ENCODE measurements at regions of chr17 and their contacts with region 1.

Region 1: GRCh38 chr17:37047631-37048104 is 98.9 kb downstream of the AATF start:
- H3K4me3 ChIP-seq: no peak overlapping the region
- H3K27ac ChIP-seq: no peak overlapping the region
- H3K4me1 ChIP-seq: peaks cover 20% of the 10 kb centered on the region; the same call in 1 of the 2 replicates
- CTCF ChIP-seq: peak; percentile 78

Region 2: GRCh38 chr17:36601303-36602029 is 446.2 kb before region 1 on chr17 and contains the start of gene MRM1:
- CTCF ChIA-PET with region 1: interaction called, 30 read pairs
- POLR2A ChIA-PET with region 1: no interaction called
- H3K4me3 ChIP-seq: peak within 1 kb of the TSS; percentile 88
- H3K27ac ChIP-seq: peak within 1 kb of the TSS; percentile 56
- H3K4me1 ChIP-seq: peaks cover 9% of the 10 kb centered on the region; the same call in 1 of the 2 replicates
- CTCF ChIP-seq: peak; percentile 61; the same call in 1 of the 2 replicates

Region 3: DNA sequence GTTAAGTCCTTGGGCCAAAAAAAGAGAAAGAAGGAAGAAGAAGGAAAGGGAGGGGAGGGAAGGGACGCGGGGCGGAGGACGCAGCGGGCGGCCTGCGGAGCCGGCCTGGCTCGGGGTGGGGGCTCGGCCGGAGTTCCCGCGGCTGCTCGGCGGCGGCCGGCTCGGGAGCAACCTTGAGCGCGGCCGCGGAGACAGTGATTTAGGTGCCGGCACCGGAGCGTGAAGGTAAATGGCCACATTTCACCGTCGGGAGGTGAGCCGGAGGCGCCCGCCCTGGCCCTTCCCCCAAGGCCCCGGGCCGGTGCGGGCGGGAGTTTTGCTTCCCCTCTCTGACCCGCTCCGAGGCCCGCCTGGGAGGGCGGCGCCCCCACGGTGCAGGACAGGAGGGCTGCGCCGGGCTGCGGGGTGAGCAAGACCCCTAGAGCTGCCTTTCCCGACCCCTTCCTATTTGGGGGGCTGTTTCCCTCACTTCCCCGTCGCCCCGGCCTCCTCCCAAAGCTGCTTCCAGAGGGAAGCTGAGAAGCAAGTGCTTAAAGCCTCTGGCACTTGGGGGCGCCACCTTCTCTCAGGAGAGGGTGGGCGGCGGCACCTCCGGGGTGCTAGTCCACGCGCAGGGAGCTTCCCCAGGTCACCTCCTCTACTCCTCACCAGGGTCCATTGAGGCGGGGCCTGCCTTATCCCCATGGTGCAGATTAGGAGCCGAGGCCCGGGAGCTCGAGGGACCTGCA is 389.7 kb before region 1 on chr17:
- CTCF ChIA-PET with region 1: interaction called, 24 read pairs
- POLR2A ChIA-PET with region 1: no interaction called
- H3K4me3 ChIP-seq: peak overlapping the region; percentile 48
- H3K27ac ChIP-seq: peak overlapping the region; percentile 28; the same call in 1 of the 2 replicates
- H3K4me1 ChIP-seq: 0 out of 2 replicates have a peak, but pooled peaks cover 2% of the 10 kb centered on the region
- CTCF ChIP-seq: peak; percentile 85

Region 4: DNA sequence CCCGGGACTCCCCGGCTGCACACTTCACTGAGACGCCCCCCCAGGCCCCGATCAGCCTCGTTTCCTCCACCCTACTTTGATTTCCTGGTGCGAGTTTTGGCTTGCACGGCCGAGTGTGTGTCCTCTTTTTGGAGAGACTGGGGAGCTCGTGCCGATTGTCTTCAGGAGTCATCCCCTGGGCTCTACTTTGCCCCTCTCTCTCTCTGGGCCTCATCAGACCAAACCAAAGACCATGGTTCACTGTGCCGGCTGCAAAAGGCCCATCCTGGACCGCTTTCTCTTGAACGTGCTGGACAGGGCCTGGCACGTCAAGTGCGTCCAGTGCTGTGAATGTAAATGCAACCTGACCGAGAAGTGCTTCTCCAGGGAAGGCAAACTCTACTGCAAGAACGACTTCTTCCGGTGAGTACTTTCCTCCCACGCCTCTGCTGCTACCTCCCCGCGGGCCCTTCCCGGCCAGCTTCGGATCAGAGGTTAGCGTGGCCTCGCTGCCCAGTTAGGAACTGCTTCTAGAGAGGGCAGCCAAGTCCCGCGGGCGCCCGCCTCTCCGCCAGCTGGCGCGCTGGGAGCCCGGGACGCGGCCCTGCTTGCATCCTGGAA is 109.6 kb before region 1 on chr17:
- CTCF ChIA-PET with region 1: interaction called, 18 read pairs
- POLR2A ChIA-PET with region 1: interaction called, 16 read pairs
- H3K4me3 ChIP-seq: peak overlapping the region; percentile 69
- H3K27ac ChIP-seq: peak overlapping the region; percentile 73; the same call in 1 of the 2 replicates
- H3K4me1 ChIP-seq: peaks cover 3% of the 10 kb centered on the region; the same call in 1 of the 2 replicates
- CTCF ChIP-seq: no peak

Region 5: GRCh38 chr17:37060928-37061327 is 13.3 kb after region 1 on chr17:
- CTCF ChIA-PET with region 1: interaction called, 16 read pairs
- POLR2A ChIA-PET with region 1: no interaction called
- H3K4me3 ChIP-seq: no peak overlapping the region
- H3K27ac ChIP-seq: no peak overlapping the region
- H3K4me1 ChIP-seq: no peaks in the 10 kb centered on the region
- CTCF ChIP-seq: no peak

Region 6: GRCh38 chr17:37111329-37111728 is 63.7 kb after region 1 on chr17:
- CTCF ChIA-PET with region 1: no interaction called
- POLR2A ChIA-PET with region 1: no interaction called
- H3K4me3 ChIP-seq: no peak overlapping the region
- H3K27ac ChIP-seq: no peak overlapping the region
- H3K4me1 ChIP-seq: peaks cover 5% of the 10 kb centered on the region
- CTCF ChIP-seq: no peak

Region 7: DNA sequence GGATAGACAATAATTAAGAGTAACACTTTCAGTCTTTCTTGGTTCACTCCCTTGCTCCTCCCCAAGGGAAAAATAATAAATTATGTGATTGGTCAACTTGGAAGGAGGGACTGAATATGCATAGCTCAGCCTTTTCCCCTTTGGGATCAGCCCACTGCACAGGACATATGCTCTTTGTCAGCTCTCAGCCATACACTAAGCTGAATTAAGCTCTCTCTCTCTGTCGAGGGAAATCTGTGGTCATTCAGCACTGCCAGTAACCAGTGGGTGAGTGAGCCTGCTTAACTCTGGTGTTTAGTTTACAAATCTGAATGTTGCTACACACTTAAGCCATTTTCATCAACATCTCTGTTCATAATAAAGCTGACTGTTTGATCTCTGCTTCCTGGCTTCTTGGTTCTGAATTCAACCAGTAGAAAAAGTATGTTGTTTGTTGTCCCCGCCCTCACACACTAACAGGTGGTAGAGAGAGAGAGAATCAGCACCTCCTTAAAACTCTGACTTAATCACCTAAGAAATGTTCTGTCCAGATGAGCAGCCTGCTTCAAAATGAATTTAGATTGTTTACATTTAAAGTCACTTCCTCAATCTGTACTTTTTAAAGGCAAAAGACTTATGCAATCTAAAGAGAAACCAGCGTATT is 225.9 kb after region 1 on chr17:
- CTCF ChIA-PET with region 1: no interaction called
- POLR2A ChIA-PET with region 1: no interaction called
- H3K4me3 ChIP-seq: no peak overlapping the region
- H3K27ac ChIP-seq: 0 out of 2 replicates have a peak overlapping the region, but pooled peaks have one; percentile 21
- H3K4me1 ChIP-seq: peaks cover 20% of the 10 kb centered on the region; the same call in 1 of the 2 replicates
- CTCF ChIP-seq: no peak

Measured in HEK293 (cell line).